Activated CD4-positive, alpha-beta T cell treated with anti-CD3 and anti-CD28 coated beads for 36 hours (primary cell): ENCODE measurements at regions of chr1 and their contacts with region 1.

Region 1: DNA sequence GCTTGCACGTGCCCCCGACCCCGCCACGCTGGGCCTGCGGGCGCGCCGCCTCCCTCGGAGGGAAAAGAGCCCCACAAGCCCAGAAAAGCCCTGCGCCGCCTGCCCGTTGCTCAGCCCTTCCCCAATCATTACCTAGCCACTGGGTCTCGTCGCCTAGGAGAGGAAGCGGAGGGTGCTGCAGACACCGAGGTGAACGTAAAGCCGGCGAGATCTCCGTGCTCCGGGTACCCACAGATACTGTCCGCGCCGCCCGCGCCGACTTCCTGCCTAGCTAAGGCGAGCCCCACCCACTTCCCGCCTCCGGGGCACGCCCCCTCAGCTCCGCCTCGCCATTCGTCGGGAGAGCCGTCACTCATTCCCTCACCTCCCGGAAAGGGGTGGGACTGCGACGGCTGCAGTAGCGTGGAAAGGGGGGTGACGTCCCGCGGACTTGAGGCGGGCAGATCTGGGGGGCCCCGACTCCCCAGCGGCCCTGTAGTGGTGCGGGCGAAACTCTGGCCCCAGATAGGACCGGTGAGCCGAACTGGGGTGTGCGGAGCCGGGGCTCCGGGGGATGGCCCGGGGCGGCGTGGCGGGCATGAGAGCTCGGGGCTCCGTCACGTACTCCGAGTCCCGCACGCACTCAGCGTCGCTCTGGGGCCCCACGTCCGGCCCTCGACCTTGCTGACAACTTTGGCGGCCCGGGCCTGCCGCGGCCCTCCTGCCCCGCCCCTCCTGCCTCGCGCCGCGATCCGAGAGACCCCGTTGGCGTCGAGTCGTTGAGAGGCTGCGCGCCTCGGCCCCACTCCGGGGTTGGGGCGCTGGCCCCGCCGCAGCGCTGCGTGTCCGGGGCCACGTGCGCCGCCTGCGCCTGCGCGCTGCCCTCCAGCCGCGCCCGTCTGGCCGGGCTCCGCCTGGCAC is at the start of gene ENO1:
- DNase-seq: peak; percentile 99
- ATAC-seq: peak; percentile 72
- H3K4me3 Mint-ChIP-seq: peak within 1 kb of the TSS; percentile 90
- H3K27ac Mint-ChIP-seq: peak within 1 kb of the TSS; percentile 99
- H3K4me1 Mint-ChIP-seq: peaks cover 35% of the 10 kb centered on the region
- H3K27me3 Mint-ChIP-seq: no peaks in the 10 kb centered on the region
- total RNA-seq, gene ENO1: 2,573 to 3,583 TPM

Region 2: DNA sequence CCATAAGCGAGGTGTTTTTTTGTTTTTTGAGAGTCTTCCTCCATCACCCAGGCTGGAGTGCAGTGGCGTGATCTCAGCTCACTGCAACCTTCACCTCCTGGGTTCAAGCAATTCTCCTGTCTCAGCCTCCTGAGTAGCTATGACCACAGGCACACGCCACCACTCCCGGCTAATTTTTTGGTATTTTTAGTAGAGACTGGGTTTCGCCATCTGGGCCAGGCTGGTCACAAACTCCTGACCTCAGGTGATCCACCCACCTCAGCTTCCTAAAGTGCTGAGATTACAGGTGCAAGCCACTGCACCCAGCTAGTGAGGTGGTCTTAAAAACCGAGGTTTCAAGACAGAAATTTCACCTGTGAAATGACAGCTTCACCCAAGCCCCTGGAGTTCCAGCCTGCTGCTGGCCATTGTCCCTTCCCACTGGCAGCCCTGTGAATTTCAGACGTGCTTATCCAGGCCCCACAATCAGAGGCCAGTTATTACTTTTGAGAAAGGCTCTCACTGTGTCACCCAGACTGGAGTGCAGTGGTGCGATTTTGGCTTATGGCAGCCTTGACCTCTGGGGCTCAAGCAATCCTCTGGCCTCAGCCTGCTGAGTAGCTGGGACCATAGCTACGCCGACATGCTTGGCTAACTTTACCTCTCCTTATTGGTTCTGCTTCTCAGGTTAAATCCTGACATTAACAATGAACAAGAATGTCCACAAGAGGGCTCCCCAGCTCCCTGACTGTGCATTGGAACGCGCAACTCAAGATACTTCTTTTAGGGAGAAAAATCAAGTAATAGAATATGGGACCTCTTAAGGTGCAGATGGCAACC is 19.6 kb before region 1 on chr1:
- CTCF ChIA-PET with region 1: interaction called, 14 read pairs
- POLR2A ChIA-PET with region 1: interaction called, 9 read pairs
- intact Hi-C with region 1: loop called (anchors 1 kb)
- DNase-seq: peak; percentile 67
- ATAC-seq: peak; percentile 55
- H3K4me3 Mint-ChIP-seq: peak overlapping the region; percentile 15
- H3K27ac Mint-ChIP-seq: peak overlapping the region; percentile 71
- H3K4me1 Mint-ChIP-seq: peaks cover 31% of the 10 kb centered on the region
- H3K27me3 Mint-ChIP-seq: no peaks in the 10 kb centered on the region

Region 3: DNA sequence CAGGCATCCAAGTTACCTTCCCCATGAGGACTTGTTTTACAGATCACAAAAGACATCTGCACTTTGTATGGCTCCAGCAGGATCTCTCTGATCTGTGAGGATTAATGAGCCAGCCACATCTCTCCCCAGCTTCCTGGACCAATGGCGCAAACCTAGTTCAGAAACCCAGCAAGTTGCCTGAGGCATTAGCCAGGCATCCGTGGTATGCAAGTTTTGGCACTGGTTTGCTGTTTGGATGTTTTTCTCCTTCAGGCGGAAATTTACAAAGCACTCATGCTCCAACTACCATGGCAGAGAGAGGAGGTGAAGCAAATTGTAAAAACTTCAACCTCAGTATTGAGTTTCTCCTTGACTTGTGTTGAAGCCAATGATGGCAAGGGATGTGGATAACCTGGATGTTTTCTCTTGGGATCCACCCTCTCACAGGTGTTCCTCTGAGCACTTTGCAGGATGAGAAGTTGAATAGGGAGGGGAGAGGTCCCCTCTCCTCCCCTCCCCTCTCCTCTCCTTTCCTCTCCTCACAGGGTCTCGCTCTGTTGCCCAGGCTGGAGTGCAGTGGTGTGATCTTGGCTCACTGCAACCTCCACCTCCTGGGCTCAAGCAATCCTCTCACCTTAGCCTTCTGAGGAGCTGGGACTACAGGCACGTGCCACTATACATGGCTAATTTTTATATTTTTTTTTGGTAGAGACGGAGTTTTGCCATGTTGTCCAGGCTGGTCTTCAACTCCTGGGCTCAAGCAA is 25.4 kb after region 1 on chr1:
- CTCF ChIA-PET with region 1: interaction called, 7 read pairs
- POLR2A ChIA-PET with region 1: interaction called, 10 read pairs
- intact Hi-C with region 1: loop called (anchors 1 kb)
- DNase-seq: no peak
- ATAC-seq: no peak
- H3K4me3 Mint-ChIP-seq: no peak overlapping the region
- H3K27ac Mint-ChIP-seq: peak overlapping the region; percentile 48
- H3K4me1 Mint-ChIP-seq: peaks cover 46% of the 10 kb centered on the region
- H3K27me3 Mint-ChIP-seq: no peaks in the 10 kb centered on the region

Region 4: DNA sequence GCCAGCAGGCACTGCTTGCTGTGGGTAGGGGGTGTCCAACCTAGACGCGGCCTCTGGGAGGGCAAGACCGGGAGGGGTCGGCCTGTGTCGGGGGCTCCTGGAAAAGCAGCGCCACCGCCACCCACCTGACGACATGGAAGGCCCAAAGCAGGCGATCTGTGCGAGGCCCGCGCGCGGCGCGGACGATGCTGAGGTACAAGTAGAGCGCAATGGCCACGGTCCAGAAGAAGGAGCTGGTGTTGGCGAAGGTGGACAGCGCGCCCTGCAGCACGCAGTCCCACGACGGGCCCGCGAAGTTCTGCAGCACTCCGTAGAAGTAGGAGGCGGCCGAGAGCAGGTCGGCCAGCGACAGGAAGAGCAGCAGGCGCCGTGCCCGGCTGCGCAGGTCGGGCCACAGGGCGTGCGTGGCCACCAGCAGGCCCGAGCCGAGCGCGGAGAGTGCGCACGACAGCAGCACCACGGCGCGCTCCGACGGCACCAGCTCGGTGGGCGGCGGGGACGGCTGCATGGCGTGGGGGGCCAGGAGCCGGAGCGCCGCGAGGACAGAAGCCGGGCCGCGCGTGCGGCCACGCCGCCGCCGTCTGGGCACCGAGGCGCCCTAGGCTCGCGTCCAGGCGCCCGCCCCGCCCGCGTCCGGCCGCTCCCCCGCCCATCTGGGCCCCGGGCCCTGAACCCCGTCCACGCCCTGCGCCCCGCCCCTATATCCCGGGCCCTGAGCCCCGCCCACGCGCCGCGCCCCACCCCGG is 250.0 kb after region 1 on chr1 and contains the start of gene GPR157:
- CTCF ChIA-PET with region 1: no interaction called
- POLR2A ChIA-PET with region 1: no interaction called
- intact Hi-C with region 1: loop called in 1 of 2 experiments (anchors 1 kb)
- DNase-seq: peak; percentile 93
- ATAC-seq: peak; percentile 84
- H3K4me3 Mint-ChIP-seq: peak within 1 kb of the TSS; percentile 83
- H3K27ac Mint-ChIP-seq: peak within 1 kb of the TSS; percentile 67
- H3K4me1 Mint-ChIP-seq: peaks cover 37% of the 10 kb centered on the region
- H3K27me3 Mint-ChIP-seq: no peaks in the 10 kb centered on the region
- total RNA-seq, gene GPR157: 2.7 to 3.6 TPM

Region 5: DNA sequence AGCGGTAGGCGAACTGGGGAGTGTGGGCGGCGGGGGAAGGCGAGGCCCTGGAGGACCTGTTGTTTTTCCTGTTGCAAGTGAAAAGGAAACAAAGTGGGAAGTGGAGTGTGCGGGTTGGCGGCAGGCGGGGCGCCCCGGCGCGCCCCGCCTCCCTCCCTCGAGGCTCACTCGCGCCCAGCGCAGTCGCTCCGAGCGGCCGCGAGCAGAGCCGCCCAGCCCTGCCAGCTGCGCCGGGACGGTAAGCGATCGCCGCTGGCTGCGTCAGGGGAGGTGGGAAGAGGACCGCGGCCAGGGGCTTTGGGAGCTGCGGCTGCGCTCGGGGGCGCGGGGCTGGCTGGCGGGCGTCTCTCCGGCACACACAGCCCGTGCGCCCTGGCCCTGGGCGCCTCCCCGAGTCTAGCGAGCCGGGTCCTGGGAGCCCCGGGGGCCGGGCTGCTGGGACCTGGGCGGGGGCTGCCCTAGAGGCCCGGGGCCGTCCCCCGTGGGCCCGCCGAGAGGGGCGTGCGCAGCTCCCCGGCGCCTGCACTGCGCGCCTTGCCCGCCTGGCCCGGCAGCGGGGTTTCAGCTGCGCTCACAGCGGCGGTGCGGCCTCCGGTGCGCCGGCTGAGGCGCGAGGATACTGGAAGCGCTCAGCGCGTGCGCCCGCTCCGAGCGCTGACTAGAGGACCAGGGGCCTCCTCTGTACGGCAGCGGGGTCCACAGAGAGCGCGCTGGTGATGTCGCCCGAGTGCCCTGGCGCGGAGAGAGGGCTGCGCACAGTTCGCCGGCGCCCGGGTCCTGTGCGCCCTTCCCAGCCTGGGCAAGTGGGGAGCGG is 773.1 kb after region 1 on chr1 and contains the start of gene PIK3CD:
- CTCF ChIA-PET with region 1: no interaction called
- POLR2A ChIA-PET with region 1: no interaction called
- intact Hi-C with region 1: loop called in 1 of 2 experiments (anchors 10 kb)
- DNase-seq: peak; percentile 69
- ATAC-seq: peak; percentile 24
- H3K4me3 Mint-ChIP-seq: peak within 1 kb of the TSS; percentile 98
- H3K27ac Mint-ChIP-seq: peak within 1 kb of the TSS; percentile 99
- H3K4me1 Mint-ChIP-seq: peaks cover 51% of the 10 kb centered on the region
- H3K27me3 Mint-ChIP-seq: no peaks in the 10 kb centered on the region
- total RNA-seq, gene PIK3CD: 96.4 to 114 TPM